Tibial artery (tissue), 4 donors: ENCODE measurements at regions of chr6 and their contacts with region 1.

Region 1: GRCh38 chr6:138001750-138002349 is 105.4 kb downstream of the PERP start:
- DNase-seq: peak in 1 of 2 donors; percentile 63
- H3K4me3 ChIP-seq: no peak overlapping the region
- H3K27ac ChIP-seq: no peak overlapping the region
- H3K4me1 ChIP-seq: no peaks in the 10 kb centered on the region
- H3K27me3 ChIP-seq: peaks cover 0 to 3% of the 10 kb centered on the region in 2 donors
- CTCF ChIP-seq: peak; percentile 75 to 81

Region 2: GRCh38 chr6:138109042-138109997 is 107.5 kb after region 1 on chr6:
- intact Hi-C with region 1: loop called (anchors 5 kb)
- DNase-seq: peak; percentile 79 to 80
- H3K4me3 ChIP-seq: no peak overlapping the region
- H3K27ac ChIP-seq: peak overlapping the region in 1 of 2 donors; percentile 5
- H3K4me1 ChIP-seq: peaks cover 0 to 28% (median 11%) of the 10 kb centered on the region in 4 donors
- H3K27me3 ChIP-seq: no peaks in the 10 kb centered on the region
- CTCF ChIP-seq: peak; percentile 86 to 98